ENCODE measurements at regions of chr2 and their contacts with region 1.

Region 1: DNA sequence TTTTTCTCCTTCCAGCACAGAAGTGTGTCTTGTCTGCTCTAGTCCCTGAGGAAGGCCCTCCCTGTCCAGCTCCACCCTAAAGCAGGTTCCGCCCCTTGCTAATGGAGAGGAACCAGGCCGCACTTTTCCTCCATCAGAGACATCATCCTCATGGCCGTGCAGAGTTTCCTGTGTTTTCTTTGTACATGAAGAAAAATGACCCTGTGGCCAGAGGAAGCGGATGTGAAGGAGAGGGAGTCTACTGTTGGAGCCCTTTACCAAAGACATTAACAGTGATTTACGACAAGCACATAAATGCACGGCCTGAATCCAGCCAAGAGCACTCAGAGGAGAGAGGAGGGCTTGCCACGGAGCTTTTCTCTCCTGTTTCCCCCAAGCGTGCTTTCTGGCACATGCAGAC is 109.5 kb downstream of the RNF144A start:
- DNase-seq: no peak
- H3K4me3 Mint-ChIP-seq: no peak overlapping the region
- H3K27ac Mint-ChIP-seq: no peak overlapping the region
- H3K4me1 Mint-ChIP-seq: peaks cover 28% of the 10 kb centered on the region
- H3K27me3 Mint-ChIP-seq: no peaks in the 10 kb centered on the region

Region 2: GRCh38 chr2:8701681-8702379 is 1675.1 kb after region 1 on chr2:
- CTCF ChIA-PET with region 1: interaction called, 11 read pairs
- POLR2A ChIA-PET with region 1: no interaction called
- DNase-seq: no peak
- H3K4me3 Mint-ChIP-seq: no peak overlapping the region
- H3K27ac Mint-ChIP-seq: no peak overlapping the region
- H3K4me1 Mint-ChIP-seq: no peaks in the 10 kb centered on the region
- H3K27me3 Mint-ChIP-seq: no peaks in the 10 kb centered on the region